ENCODE measurements at regions of chr4 and their contacts with region 1.

Region 1: DNA sequence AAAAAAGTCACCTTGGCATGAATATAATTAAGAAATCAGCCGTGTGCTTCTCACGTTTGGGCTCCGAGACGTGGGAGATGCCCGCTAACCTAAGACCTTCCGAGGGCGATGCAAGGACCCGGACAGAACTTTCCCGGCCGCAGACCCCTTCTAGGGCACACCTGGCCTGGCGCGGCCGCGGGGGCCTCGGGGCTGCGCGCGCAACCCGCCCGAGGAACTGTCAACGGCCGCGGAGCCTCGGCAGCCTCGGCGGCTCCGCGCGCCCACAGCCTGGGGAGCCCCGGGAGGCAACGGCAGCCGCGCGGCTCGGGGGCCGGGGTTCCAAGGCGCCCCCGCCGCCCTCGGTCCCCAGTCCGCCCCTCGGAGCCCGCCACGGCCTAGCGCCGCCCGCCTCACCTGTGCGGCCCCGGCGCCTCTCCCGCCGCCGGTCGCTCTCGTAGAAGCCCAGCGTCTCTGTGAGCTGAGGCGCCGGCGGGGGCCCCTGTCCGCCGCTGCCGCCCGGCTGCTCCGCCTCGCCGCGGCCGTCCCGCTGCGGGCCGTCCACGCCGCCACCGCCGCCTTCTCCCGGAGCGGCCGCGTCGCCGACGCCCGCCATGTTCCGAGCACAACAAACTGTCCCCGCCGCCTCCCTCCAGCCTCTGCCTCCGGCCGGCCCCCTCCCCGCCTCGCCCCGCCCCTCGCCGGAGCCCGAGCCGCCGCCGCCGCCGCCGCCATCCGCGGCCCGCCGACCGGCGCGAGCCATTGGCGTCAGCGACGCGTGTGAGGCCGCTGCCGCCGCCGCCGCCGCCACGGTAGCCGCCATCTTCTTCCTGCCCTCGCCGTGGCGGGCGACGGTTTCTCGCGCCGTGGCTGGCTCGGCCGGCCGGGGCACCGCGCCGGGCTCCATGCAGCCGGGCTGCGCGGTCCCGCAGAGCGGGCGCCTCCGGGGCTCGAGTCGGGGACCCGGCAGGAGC is at the start of gene TAPT1:
- DNase-seq: peak; percentile 74
- ATAC-seq: peak; percentile 77
- H3K4me3 Mint-ChIP-seq: peak within 1 kb of the TSS; percentile 97
- H3K27ac Mint-ChIP-seq: peak within 1 kb of the TSS; percentile 98
- H3K4me1 Mint-ChIP-seq: peaks cover 69% of the 10 kb centered on the region
- H3K27me3 Mint-ChIP-seq: no peaks in the 10 kb centered on the region
- CTCF ChIP-seq: no peak
- total RNA-seq, gene TAPT1: 30.0 and 35.0 TPM in 2 replicates

Region 2: DNA sequence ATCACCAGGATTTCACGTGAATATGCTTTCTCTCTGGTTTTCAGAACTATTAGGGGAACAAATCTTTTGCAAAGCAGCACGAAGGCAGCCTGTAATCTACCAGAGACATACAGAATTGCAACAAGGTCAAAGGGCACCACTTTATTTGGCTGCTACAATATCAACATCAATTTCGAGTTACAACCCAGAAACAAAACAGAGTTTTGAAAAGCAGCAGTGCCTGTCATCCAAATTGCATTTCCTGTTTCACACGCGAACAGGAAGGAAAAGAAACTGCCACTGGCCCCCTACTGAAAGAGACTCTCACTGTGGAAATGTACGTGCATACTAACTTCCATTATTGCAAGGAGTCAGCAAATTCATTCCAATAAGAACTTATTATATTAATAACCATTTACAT is 815.4 kb before region 1 on chr4:
- CTCF ChIA-PET with region 1: no interaction called
- POLR2A ChIA-PET with region 1: no interaction called
- intact Hi-C with region 1: loop called (anchors 10 kb)
- DNase-seq: no peak
- ATAC-seq: peak; percentile 68
- H3K4me3 Mint-ChIP-seq: peak overlapping the region; percentile 73
- H3K27ac Mint-ChIP-seq: peak overlapping the region; percentile 79
- H3K4me1 Mint-ChIP-seq: peaks cover 67% of the 10 kb centered on the region
- H3K27me3 Mint-ChIP-seq: no peaks in the 10 kb centered on the region
- CTCF ChIP-seq: no peak

Region 3: GRCh38 chr4:15681207-15682015 is 544.7 kb before region 1 on chr4 and contains the start of gene FAM200B:
- CTCF ChIA-PET with region 1: no interaction called
- POLR2A ChIA-PET with region 1: no interaction called
- intact Hi-C with region 1: loop called (anchors 10 kb)
- DNase-seq: peak; percentile 98
- ATAC-seq: peak; percentile 98
- H3K4me3 Mint-ChIP-seq: peak within 1 kb of the TSS; percentile 97
- H3K27ac Mint-ChIP-seq: peak within 1 kb of the TSS; percentile 93
- H3K4me1 Mint-ChIP-seq: peaks cover 27% of the 10 kb centered on the region
- H3K27me3 Mint-ChIP-seq: no peaks in the 10 kb centered on the region
- CTCF ChIP-seq: no peak
- total RNA-seq, gene FAM200B: 9.1 and 11.3 TPM in 2 replicates

Region 4: DNA sequence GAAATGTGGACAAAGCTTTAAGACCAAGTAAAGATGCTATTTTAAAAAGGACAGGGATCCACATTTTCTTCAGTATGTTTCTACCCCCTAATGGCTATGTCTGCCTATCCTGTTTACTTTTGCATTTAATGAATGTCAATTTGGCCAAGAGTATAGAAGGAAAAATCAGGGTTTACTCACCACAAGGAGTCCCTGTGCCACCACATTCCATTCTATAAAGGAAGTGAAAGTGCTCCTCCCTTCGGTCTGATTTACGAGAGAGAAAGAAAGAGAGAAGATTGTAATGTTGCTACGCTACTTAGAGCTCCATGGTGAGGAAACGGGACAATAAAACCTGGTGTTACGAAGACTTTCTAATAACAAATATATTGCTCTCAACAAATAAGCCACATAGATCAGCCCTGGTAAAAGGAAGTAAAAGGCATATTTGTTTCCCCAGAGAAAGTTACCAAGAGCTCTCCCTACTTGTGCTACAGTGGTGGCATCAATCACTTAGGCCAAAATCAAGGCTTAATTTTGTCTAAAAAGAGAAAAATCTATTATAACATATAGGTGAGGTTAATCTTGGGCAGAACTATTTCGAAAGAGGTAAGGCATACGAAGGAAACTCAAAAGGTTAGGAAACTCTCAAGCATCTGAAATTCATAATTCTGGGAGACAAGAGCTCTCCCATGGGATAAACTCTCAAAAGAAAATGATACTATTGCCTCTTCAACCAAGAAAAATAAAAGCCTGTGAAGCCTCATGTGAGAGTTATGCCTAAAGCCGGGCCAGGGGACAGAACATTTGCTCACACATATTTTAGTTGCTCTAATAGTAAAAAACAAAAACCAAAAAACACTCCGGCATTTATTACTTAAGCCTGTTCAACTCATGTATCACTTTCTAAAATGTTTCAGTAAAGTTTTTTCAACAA is 29.4 kb before region 1 on chr4:
- CTCF ChIA-PET with region 1: interaction called, 5 read pairs
- POLR2A ChIA-PET with region 1: interaction called, 6 read pairs
- intact Hi-C with region 1: loop called (anchors 1 kb)
- DNase-seq: no peak
- ATAC-seq: peak; percentile 86
- H3K4me3 Mint-ChIP-seq: peak overlapping the region; percentile 66
- H3K27ac Mint-ChIP-seq: peak overlapping the region; percentile 73
- H3K4me1 Mint-ChIP-seq: peaks cover 25% of the 10 kb centered on the region
- H3K27me3 Mint-ChIP-seq: no peaks in the 10 kb centered on the region
- CTCF ChIP-seq: no peak

Region 5: GRCh38 chr4:16264798-16265197 is 38.7 kb after region 1 on chr4:
- CTCF ChIA-PET with region 1: no interaction called
- POLR2A ChIA-PET with region 1: interaction called, 5 read pairs
- intact Hi-C with region 1: loop called (anchors 2 kb)
- DNase-seq: no peak
- ATAC-seq: peak; percentile 62
- H3K4me3 Mint-ChIP-seq: no peak overlapping the region
- H3K27ac Mint-ChIP-seq: no peak overlapping the region
- H3K4me1 Mint-ChIP-seq: peaks cover 44% of the 10 kb centered on the region
- H3K27me3 Mint-ChIP-seq: no peaks in the 10 kb centered on the region
- CTCF ChIP-seq: no peak

Region 6: DNA sequence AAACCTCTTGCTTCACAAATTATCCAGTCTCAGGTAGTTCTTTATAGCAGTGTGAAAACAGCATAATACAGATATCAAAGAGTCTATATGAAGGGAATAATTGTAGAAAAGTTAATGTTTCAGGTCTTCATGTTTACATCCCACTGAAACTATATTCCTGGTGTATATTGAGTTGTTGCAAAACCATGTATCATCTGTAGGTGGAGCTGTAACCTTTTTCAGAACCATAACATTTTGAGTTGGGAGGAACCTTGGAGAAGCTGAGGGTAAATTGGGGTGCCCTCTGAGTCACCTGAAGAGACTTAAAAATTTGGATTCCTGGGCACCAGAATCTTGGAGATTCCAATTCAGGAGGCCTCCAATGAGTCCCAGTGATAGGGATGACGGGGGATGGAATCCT is 52.0 kb after region 1 on chr4:
- CTCF ChIA-PET with region 1: no interaction called
- POLR2A ChIA-PET with region 1: no interaction called
- intact Hi-C with region 1: no loop called
- DNase-seq: no peak
- ATAC-seq: no peak
- H3K4me3 Mint-ChIP-seq: no peak overlapping the region
- H3K27ac Mint-ChIP-seq: no peak overlapping the region
- H3K4me1 Mint-ChIP-seq: no peaks in the 10 kb centered on the region
- H3K27me3 Mint-ChIP-seq: peaks cover 1% of the 10 kb centered on the region
- CTCF ChIP-seq: no peak

Region 7: DNA sequence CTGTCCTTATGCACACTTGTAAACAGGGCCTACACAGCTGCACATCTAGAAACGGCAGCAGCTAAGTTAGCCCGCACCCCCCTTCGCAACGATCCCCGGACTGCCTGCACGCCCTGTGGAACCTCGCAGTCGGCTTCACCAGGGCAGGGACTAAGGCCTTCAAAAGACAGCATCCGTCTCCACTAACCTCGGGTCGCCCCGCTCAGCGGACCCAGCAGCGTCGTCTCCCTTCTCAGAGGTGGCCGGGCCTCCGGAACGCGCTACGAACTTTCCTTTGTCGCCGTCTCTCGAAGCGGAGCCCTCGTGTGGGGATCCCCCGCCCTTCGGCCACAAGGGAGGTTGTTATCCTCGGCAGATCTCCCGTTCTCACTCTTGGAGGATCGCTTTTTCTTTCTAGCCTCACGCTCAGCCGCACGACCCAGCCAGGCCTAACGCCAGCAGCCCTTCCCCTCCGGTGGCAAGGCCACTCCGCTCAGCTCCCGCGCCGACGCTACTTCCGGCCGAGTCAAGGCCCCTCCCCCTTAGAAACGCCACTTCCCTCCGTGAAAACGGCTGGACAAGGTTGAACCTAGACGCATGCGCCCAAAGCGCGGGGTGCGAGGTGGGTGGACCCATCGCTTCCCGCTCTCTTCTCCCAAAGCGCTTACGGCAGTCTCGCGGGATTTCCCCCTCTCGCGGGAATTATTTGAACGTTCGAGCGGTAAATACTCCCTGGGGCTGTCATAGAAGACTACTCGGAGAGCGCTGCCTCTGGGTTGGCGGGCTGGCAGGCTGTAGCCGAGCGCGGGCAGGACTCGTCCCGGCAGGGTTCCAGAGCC is 1584.3 kb after region 1 on chr4 and contains the starts of genes DCAF16 and NCAPG:
- CTCF ChIA-PET with region 1: no interaction called
- POLR2A ChIA-PET with region 1: no interaction called
- intact Hi-C with region 1: loop called (anchors 5 kb)
- DNase-seq: peak; percentile 98
- ATAC-seq: peak; percentile 93
- H3K4me3 Mint-ChIP-seq: peak within 1 kb of the TSS; percentile 96
- H3K27ac Mint-ChIP-seq: peak within 1 kb of the TSS; percentile 96
- H3K4me1 Mint-ChIP-seq: peaks cover 57% of the 10 kb centered on the region
- H3K27me3 Mint-ChIP-seq: no peaks in the 10 kb centered on the region
- CTCF ChIP-seq: no peak
- total RNA-seq, gene DCAF16: 42.9 and 57.2 TPM in 2 replicates
- total RNA-seq, gene NCAPG: 1.1 and 1.5 TPM in 2 replicates

Measured in activated B cell treated with CpG ODN at 0.5 μM for 24 hours (primary cell).